HEK293 (cell line): ENCODE measurements at regions of chr1 and their contacts with region 1.

Region 1: GRCh38 chr1:99969729-99970621 is at the start of gene SLC35A3:
- H3K4me3 ChIP-seq: peak within 1 kb of the TSS; percentile 85
- H3K27ac ChIP-seq: peak within 1 kb of the TSS; percentile 53
- H3K4me1 ChIP-seq: no peaks in the 10 kb centered on the region
- CTCF ChIP-seq: peak; percentile 86

Region 2: DNA sequence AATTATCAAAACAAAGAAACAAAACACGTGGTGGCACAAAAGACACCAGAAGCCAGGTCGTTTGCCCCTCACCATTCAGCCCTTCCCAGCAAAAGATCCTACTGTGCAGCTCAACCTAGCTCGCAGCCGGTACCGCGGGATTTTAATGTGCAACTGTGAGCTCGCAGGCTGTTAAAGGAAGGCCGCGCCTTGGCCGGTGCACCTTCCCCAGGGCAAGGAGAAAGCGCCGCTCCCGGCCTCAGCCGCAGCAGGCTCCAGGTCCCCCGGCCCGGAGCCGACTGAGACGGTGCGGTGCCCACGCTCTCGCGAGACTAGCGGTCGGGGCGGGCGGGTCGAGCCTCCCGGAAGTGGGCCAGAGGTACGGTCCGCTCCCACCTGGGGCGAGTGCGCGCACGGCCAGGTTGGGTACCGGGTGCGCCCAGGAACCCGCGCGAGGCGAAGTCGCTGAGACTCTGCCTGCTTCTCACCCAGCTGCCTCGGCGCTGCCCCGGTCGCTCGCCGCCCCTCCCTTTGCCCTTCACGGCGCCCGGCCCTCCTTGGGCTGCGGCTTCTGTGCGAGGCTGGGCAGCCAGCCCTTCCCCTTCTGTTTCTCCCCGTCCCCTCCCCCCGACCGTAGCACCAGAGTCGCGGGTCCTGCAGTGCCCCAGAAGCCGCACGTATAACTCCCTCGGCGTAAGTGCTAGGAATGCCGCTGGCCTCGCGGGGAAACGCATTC is 120.1 kb before region 1 on chr1 and contains the start of gene AGL:
- CTCF ChIA-PET with region 1: no interaction called
- POLR2A ChIA-PET with region 1: interaction called, 10 read pairs
- H3K4me3 ChIP-seq: peak within 1 kb of the TSS; percentile 81
- H3K27ac ChIP-seq: peak within 1 kb of the TSS; percentile 66
- H3K4me1 ChIP-seq: peaks cover 3% of the 10 kb centered on the region
- CTCF ChIP-seq: 0 out of 2 replicates have a peak, but pooled peaks have one; percentile 52

Region 3: GRCh38 chr1:99950486-99950885 is 19.5 kb before region 1 on chr1:
- CTCF ChIA-PET with region 1: no interaction called
- POLR2A ChIA-PET with region 1: no interaction called
- H3K4me3 ChIP-seq: no peak overlapping the region
- H3K27ac ChIP-seq: no peak overlapping the region
- H3K4me1 ChIP-seq: no peaks in the 10 kb centered on the region
- CTCF ChIP-seq: no peak

Region 4: DNA sequence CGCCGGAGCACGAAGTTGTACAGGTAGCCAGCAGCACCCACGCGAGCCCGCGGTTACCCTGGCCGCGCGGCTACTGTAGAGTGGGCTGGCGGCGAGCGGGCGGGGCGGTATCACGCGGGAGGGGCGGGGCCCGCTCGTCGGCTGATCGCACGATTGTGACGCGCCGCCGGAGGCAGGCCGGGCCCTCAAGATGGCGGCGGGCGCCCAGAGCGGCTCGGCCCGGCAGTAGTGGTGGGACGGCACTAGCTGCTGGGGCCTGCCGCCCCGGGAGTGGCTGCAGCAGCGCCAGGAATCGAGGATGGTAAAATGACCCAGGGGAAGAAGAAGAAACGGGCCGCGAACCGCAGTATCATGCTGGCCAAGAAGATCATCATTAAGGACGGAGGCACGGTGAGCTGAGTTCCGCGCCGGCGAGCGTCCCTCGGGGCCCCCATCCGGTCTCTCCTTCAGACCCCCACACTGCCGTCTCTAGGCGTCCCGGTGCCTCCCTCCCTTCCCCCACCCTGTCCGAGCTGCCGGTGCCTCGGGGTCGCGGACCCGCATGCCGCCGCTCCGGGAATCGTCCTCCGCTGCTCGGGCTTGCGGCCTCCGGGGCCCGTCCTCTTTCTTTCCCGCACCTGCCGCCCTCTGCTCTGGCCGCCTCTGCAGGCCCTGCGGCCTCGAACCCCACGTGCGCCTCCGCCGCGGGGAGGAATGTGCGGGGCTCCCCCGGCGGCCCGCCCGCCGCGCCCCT is 68.1 kb after region 1 on chr1:
- CTCF ChIA-PET with region 1: no interaction called
- POLR2A ChIA-PET with region 1: interaction called, 11 read pairs
- H3K4me3 ChIP-seq: peak overlapping the region; percentile 87
- H3K27ac ChIP-seq: peak overlapping the region; percentile 96
- H3K4me1 ChIP-seq: no peaks in the 10 kb centered on the region
- CTCF ChIP-seq: peak; percentile 50; the same call in 1 of the 2 replicates

Region 5: GRCh38 chr1:100122177-100122576 is 152.2 kb after region 1 on chr1:
- CTCF ChIA-PET with region 1: no interaction called
- POLR2A ChIA-PET with region 1: no interaction called
- H3K4me3 ChIP-seq: no peak overlapping the region
- H3K27ac ChIP-seq: no peak overlapping the region
- H3K4me1 ChIP-seq: no peaks in the 10 kb centered on the region
- CTCF ChIP-seq: no peak